PC-9 (cell line): ENCODE measurements at regions of chr17 and their contacts with region 1.

Region 1: DNA sequence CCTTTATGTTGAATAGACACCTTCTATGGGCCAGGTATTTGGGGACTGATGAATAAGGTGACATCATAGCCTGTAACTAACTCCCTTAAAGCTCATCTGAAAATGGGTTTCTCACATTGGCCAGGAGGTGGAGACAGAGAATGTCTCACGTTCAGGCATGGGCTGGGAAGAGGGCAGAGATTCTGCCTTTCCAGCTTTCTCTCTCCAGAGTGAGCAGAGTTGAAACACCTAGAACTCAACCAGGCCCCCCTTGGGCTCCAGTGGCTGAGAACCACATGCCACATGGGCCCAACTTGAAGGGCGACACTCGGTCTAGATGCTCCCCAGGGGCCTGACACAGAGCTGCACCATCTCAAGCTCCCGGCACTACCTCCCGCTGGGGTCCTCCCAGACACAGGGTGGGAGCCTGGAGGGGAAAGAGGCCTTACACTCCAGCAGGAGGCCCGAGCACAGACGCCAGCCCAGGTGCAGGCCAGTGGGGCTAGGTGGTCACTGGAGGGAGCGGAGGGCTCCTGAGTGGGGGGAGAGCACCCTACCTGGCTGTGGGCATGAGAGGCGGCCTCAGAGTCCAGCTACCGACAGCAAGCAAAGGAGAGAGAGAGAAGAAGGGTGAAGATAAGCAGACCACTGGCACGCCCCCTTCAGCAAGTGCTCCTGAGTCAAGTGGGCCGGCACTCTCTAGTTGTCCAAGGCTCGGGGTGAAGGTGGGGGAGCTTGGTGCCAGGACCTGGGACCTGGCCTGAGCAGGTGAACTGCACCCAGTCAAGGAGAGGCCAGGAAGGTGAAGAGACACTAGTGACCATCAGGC is 55.9 kb downstream of the MYO18A start:
- DNase-seq: peak; percentile 64 to 76
- H3K4me3 ChIP-seq: no peak overlapping the region
- H3K27ac ChIP-seq: peak overlapping the region; percentile 81
- H3K4me1 ChIP-seq: peaks cover 32% of the 10 kb centered on the region
- H3K27me3 ChIP-seq: no peaks in the 10 kb centered on the region
- CTCF ChIP-seq: peak; percentile 78

Region 2: DNA sequence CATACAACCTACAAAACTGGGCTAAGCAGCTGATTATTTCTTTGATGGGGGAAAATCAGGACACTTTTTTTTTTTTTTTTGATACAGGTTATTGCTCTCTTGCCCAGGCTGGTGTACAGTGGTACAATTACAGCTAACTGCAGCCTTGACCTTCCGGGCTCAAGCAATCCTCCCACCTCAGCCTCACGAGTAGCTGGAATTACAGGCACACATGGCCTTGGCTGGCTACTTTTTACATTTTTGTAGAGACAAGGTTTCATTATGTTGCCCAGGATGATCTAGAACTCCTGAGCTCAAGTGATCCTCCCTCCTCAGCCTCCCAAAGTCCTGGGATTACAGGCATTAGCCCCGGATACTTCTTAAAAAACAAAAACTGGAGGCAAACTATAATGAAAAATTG is 825.9 kb before region 1 on chr17:
- CTCF ChIA-PET with region 1: no interaction called
- POLR2A ChIA-PET with region 1: no interaction called
- intact Hi-C with region 1: no loop called
- DNase-seq: no peak
- H3K4me3 ChIP-seq: no peak overlapping the region
- H3K27ac ChIP-seq: no peak overlapping the region
- H3K4me1 ChIP-seq: peaks cover 9% of the 10 kb centered on the region
- H3K27me3 ChIP-seq: no peaks in the 10 kb centered on the region
- CTCF ChIP-seq: no peak

Region 3: GRCh38 chr17:28967221-28968140 is 156.8 kb before region 1 on chr17:
- CTCF ChIA-PET with region 1: interaction called, 12 read pairs
- POLR2A ChIA-PET with region 1: no interaction called
- intact Hi-C with region 1: no loop called
- DNase-seq: no peak
- H3K4me3 ChIP-seq: no peak overlapping the region
- H3K27ac ChIP-seq: no peak overlapping the region
- H3K4me1 ChIP-seq: peaks cover 11% of the 10 kb centered on the region; the same call in 1 of the 2 replicates
- H3K27me3 ChIP-seq: no peaks in the 10 kb centered on the region
- CTCF ChIP-seq: no peak

Region 4: DNA sequence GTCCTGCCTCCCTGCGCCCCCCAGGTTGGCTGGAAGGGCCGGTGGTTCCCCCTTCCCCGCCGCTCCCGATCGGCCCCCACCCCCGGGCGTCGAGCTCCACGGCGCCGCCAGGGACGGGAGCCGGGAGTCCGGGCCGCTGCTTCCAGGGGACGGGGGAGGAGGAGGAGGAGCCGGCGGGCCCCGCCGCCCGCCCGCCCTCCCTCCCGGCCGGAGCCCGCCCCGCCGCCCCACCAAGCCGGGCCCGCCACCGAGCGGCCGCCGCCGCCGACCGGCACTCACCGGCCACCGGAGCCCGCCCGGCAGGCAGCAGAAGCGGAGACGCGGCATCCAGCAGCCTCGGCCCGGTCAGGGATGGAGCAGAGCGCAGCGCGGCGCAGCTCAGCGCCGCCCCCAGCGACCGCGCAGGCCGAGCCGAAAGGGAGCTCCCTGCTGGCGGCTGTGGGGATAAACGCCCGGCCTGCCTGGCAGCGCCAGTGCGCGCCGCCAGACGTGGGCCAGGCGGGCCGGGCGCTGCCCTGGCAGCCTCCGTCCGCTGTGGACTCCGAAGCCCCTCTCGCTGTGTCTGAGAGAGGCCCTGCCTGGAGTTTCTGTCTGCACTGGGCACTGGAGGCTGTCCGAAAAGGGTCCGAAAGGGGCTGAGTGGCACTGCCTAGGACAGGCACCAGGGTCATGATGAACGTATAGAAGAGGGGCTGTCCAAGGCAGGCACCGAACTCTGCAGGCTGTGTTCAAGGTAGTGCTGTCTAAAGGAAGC is 55.9 kb after region 1 on chr17 and contains the start of gene MYO18A:
- CTCF ChIA-PET with region 1: interaction called, 13 read pairs
- POLR2A ChIA-PET with region 1: interaction called, 7 read pairs
- intact Hi-C with region 1: loop called (anchors 2 kb)
- DNase-seq: peak; percentile 54 to 79
- H3K4me3 ChIP-seq: peak within 1 kb of the TSS; percentile 71
- H3K27ac ChIP-seq: peak within 1 kb of the TSS; percentile 97
- H3K4me1 ChIP-seq: peaks cover 47% of the 10 kb centered on the region
- H3K27me3 ChIP-seq: no peaks in the 10 kb centered on the region
- CTCF ChIP-seq: peak; percentile 78
- total RNA-seq, gene MYO18A: 150 and 158 TPM in 2 replicates

Region 5: DNA sequence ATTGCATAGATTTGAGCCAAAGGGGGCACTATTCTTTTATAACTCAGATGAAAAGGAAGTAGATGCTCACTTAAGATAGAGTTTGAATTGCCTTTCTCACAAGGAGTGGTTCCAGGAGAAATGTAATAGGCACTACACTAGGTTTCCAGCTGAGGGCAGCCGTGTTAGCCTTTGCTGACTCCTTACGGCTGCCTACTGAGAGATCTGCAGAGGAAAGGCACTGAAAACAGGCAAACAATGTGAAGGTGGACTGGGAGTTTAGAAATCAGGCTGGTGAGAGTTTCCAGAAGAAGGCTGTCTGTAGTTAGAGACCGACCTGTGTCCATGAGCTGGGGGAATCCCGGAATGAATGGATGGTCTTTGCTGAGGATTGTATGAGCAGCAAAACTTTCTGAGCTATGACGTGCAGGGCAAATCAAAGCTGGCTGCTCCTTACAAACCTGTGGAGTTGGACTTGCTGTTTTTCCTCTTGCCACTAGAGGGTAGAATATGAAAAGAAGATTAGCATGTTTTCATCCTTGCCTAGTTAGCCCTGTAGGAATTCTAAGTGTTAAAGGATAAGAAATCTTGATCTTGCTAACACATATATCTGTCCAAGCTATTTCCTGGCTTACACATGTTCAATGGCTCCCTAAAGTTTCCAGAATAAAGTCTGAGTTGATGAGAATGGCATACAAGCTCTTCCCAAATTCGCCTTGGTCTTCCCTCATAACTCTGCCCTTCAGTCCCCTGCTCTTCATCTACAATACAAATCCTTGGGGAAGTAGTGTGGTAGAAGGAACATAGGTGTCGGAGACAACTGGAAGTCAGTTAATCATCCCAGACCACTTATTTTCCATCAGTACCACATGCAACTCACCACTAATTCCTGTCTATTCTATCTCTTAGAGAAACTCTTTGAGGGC is 245.8 kb after region 1 on chr17:
- CTCF ChIA-PET with region 1: interaction called, 3 read pairs
- POLR2A ChIA-PET with region 1: no interaction called
- intact Hi-C with region 1: loop called (anchors 1 kb)
- DNase-seq: peak; percentile 61 to 71
- H3K4me3 ChIP-seq: peak overlapping the region; percentile 10; the same call in 1 of the 2 replicates
- H3K27ac ChIP-seq: no peak overlapping the region
- H3K4me1 ChIP-seq: peaks cover 11% of the 10 kb centered on the region
- H3K27me3 ChIP-seq: no peaks in the 10 kb centered on the region
- CTCF ChIP-seq: peak; percentile 89